ENCODE measurements at regions of chr14 and their contacts with region 1.

Region 1: DNA sequence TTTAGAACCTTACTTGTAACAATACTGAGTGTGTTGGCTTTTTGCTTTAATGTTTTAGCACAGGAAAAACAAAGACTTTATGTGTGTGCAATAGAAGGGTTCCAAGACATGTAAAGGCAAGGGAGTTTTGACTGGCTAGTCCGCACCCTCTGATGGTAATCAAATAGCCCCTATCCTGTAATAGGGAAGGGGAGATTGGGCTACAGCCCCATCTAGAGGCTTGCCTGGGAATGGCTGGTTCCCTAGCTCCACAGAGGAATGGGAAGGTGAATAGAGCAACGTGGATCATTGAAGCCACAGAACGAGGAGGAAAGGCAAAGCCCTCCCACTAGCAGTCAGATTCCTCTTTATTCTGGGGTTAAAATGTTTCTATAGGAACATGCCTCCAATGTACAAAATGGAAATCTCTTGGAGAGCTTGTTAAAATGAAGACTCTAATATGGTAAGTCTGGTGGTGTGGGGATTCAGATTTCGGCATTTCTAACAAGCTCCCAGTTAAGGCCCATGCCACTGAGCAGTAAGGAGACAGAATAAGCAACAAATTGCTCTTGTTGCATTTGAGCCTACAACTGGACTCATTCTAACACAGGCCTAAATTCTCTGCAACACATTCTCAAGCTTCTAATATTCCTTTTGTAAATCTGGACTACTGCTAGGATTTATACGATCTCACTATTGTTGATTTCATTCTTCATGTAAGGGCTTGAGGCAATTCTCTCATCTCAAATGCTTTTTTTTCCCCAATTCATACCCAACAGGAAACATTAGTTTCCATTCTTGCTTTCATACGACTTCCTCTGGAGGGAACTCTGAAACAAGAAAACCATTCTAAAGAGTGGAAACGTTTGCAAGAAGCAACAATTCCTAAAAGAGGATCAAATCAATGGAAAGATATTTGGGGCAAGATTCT is 57.1 kb downstream of the NIN start:
- DNase-seq: peak; percentile 59
- H3K4me3 ChIP-seq: no peak overlapping the region
- H3K27ac ChIP-seq: peak overlapping the region; percentile 9
- H3K4me1 ChIP-seq: peaks cover 43% of the 10 kb centered on the region
- H3K27me3 ChIP-seq: no peaks in the 10 kb centered on the region
- CTCF ChIP-seq: peak; percentile 92 to 97

Region 2: DNA sequence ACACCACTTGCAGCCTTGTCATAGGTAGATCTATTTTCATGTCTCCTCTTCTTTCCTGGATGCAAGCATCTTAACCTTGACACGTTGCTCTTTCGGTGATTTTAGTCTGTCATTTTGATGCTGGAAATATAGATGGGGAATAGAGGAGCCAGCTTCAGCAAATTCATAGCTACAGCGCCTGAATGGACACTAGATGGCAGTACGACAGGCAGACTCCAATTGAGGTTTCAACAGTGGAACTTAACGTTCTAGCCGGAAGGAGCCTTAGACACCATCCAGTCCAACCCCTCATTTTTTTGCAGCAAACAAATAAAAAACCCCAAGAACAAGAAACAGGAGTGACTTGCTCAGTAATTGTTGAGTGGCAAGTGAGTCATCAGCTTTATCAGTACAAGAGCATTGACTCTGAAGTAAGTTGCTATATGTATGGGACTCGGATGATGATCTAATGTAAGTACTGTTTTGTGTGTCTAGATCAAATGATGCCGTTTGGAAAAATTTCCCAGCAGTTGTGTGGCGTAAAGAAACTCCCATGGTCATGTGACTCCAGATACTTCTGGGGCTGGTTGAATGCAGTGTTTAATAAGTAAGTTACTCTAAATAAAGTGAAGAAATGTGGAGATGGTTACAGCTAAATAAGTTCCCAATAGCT is 452.8 kb before region 1 on chr14:
- CTCF ChIA-PET with region 1: no interaction called
- dilution Hi-C with region 1: no loop called
- in situ Hi-C with region 1: loop called (anchors 10 to 25 kb)
- intact Hi-C with region 1: loop called (anchors 2 kb)
- DNase-seq: peak; percentile 99
- H3K4me3 ChIP-seq: no peak overlapping the region
- H3K27ac ChIP-seq: peak overlapping the region; percentile 95
- H3K4me1 ChIP-seq: peaks cover 26% of the 10 kb centered on the region
- H3K27me3 ChIP-seq: no peaks in the 10 kb centered on the region
- CTCF ChIP-seq: peak; percentile 87 to 91

Region 3: GRCh38 chr14:50542941-50543418 is 230.9 kb before region 1 on chr14:
- CTCF ChIA-PET with region 1: interaction called, 5 read pairs
- dilution Hi-C with region 1: no loop called
- in situ Hi-C with region 1: loop called (anchors 5 kb)
- intact Hi-C with region 1: loop called (anchors 1 kb)
- DNase-seq: peak; percentile 60
- H3K4me3 ChIP-seq: no peak overlapping the region
- H3K27ac ChIP-seq: no peak overlapping the region
- H3K4me1 ChIP-seq: peaks cover 7% of the 10 kb centered on the region
- H3K27me3 ChIP-seq: no peaks in the 10 kb centered on the region
- CTCF ChIP-seq: peak; percentile 54 to 63

Region 4: GRCh38 chr14:50619556-50620141 is 154.2 kb before region 1 on chr14:
- CTCF ChIA-PET with region 1: interaction called, 8 read pairs
- dilution Hi-C with region 1: no loop called
- in situ Hi-C with region 1: no loop called
- intact Hi-C with region 1: loop called (anchors 1 kb)
- DNase-seq: peak; percentile 32
- H3K4me3 ChIP-seq: no peak overlapping the region
- H3K27ac ChIP-seq: no peak overlapping the region
- H3K4me1 ChIP-seq: peaks cover 9% of the 10 kb centered on the region
- H3K27me3 ChIP-seq: no peaks in the 10 kb centered on the region
- CTCF ChIP-seq: peak; percentile 71 to 75

Region 5: GRCh38 chr14:50714450-50715073 is 59.3 kb before region 1 on chr14:
- CTCF ChIA-PET with region 1: interaction called, 9 read pairs
- dilution Hi-C with region 1: no loop called
- in situ Hi-C with region 1: no loop called
- intact Hi-C with region 1: loop called (anchors 5 kb)
- DNase-seq: peak; percentile 44
- H3K4me3 ChIP-seq: no peak overlapping the region
- H3K27ac ChIP-seq: no peak overlapping the region
- H3K4me1 ChIP-seq: no peaks in the 10 kb centered on the region
- H3K27me3 ChIP-seq: no peaks in the 10 kb centered on the region
- CTCF ChIP-seq: peak; percentile 55 to 61

Region 6: GRCh38 chr14:50954811-50955372 is 181.0 kb after region 1 on chr14:
- CTCF ChIA-PET with region 1: no interaction called
- dilution Hi-C with region 1: no loop called
- in situ Hi-C with region 1: no loop called
- intact Hi-C with region 1: loop called (anchors 5 kb)
- DNase-seq: peak; percentile 66
- H3K4me3 ChIP-seq: peak overlapping the region in 2 of 3 experiments; percentile 20 to 33
- H3K27ac ChIP-seq: peak overlapping the region; percentile 88
- H3K4me1 ChIP-seq: peaks cover 14% of the 10 kb centered on the region
- H3K27me3 ChIP-seq: no peaks in the 10 kb centered on the region
- CTCF ChIP-seq: peak; percentile 53 to 74